K562 (cell line): ENCODE measurements at regions of chr10 and their contacts with region 1.

Region 1: GRCh38 chr10:115171392-115171960 is 78.3 kb downstream of the ATRNL1 start:
- DNase-seq: peak in 2 of 4 experiments; percentile 0 to 2
- ATAC-seq: no peak
- H3K4me3 ChIP-seq: no peak overlapping the region
- H3K27ac ChIP-seq: no peak overlapping the region
- H3K4me1 ChIP-seq: no peaks in the 10 kb centered on the region
- H3K27me3 ChIP-seq: no peaks in the 10 kb centered on the region
- CTCF ChIP-seq: 0 out of 6 replicates have a peak, but pooled peaks of 1 of the 3 experiments have one; percentile 4
- EP300 ChIP-seq: no peak
- POLR2A ChIP-seq: no peak
- RAD21 ChIP-seq: peak in 1 of 2 experiments; percentile 27; a peak in 1 of 4 replicates

Region 2: GRCh38 chr10:116385994-116386809 is 1214.7 kb after region 1 on chr10:
- CTCF ChIA-PET with region 1: no interaction called
- POLR2A ChIA-PET with region 1: no interaction called
- in situ Hi-C with region 1: no loop called
- intact Hi-C with region 1: loop called (anchors 10 kb)
- DNase-seq: peak in 2 of 4 experiments; percentile 2 to 16
- ATAC-seq: no peak
- H3K4me3 ChIP-seq: no peak overlapping the region
- H3K27ac ChIP-seq: no peak overlapping the region
- H3K4me1 ChIP-seq: no peaks in the 10 kb centered on the region
- H3K27me3 ChIP-seq: no peaks in the 10 kb centered on the region
- CTCF ChIP-seq: peak in 1 of 3 experiments; percentile 39; a peak in 1 of 6 replicates
- EP300 ChIP-seq: no peak
- POLR2A ChIP-seq: no peak
- RAD21 ChIP-seq: peak; percentile 40 to 52

Region 3: DNA sequence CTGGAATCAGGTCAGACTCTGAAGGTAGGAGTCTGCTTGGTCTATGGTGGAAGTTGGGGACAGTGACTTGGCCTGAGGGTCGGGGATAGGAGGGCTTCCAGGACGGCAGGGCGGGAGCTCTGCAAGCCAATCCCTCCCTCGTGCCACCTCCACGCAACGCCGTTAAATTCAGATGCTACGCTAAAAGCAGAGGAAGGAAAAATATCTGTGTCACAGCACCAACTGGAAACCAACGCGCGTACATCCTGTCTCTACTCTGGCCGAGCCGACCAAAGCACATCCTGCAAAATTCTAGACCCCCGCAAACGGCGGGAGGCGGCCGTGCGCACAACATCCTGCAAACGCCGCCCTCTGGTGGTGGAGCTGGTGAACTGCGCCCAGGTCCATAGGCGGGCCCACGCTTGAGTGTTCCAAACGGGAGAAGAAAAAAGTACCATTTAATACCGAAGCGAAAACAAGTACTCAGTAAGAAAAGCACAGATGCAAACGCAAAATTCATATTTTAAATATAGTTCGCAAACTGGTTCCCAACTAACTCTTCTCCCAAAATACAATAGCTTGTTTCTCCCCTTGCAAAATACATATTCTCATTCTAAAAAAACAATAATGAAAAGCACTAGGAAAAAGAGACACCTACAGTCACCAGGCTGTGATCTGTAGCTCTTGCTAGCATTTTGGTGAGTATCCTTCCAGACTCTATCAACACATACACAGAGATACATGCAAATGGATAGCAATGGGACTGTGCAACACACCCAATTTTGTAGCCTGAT is 1616.6 kb after region 1 on chr10:
- CTCF ChIA-PET with region 1: no interaction called
- POLR2A ChIA-PET with region 1: no interaction called
- in situ Hi-C with region 1: no loop called
- intact Hi-C with region 1: no loop called
- DNase-seq: peak; percentile 49 to 68 (median 64)
- ATAC-seq: peak; percentile 91
- H3K4me3 ChIP-seq: no peak overlapping the region
- H3K27ac ChIP-seq: no peak overlapping the region
- H3K4me1 ChIP-seq: no peaks in the 10 kb centered on the region
- H3K27me3 ChIP-seq: 0 out of 5 replicates have a peak, but pooled peaks cover 0 to 6% of the 10 kb centered on the region in 2 experiments
- CTCF ChIP-seq: peak; percentile 68 to 93 (median 83)
- EP300 ChIP-seq: no peak
- POLR2A ChIP-seq: no peak
- RAD21 ChIP-seq: peak; percentile 54 to 67